ENCODE measurements at regions of chr18 and their contacts with region 1.

Region 1: GRCh38 chr18:64474773-64475172 is 325.9 kb upstream of the LINC00305 start:
- DNase-seq: no peak
- ATAC-seq: no peak
- H3K4me3 ChIP-seq: no peak overlapping the region
- H3K27ac ChIP-seq: no peak overlapping the region
- H3K4me1 ChIP-seq: no peaks in the 10 kb centered on the region
- H3K27me3 ChIP-seq: no peaks in the 10 kb centered on the region
- CTCF ChIP-seq: no peak
- EP300 ChIP-seq: no peak
- POLR2A ChIP-seq: no peak
- RAD21 ChIP-seq: no peak

Region 2: DNA sequence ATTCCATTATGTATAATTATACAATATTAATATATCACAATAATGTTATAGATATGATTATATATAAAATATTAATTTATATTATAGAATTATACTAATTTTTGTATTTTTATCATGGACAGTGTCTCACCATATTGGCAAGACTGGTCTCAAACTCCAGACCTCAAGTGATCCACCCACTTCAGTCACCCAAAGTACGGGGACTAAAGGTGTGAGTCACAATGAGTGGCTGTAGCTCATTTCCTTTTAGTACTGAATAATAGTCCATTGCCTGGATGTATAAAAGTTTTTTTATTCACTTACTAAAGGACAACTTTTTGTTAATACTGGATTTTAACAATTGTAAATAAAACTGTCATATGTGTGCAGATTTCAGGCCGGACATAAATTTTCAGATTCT is 91.7 kb after region 1 on chr18:
- CTCF ChIA-PET with region 1: no interaction called
- POLR2A ChIA-PET with region 1: no interaction called
- in situ Hi-C with region 1: loop called (anchors 25 kb)
- intact Hi-C with region 1: no loop called
- DNase-seq: no peak
- ATAC-seq: no peak
- H3K4me3 ChIP-seq: no peak overlapping the region
- H3K27ac ChIP-seq: no peak overlapping the region
- H3K4me1 ChIP-seq: no peaks in the 10 kb centered on the region
- H3K27me3 ChIP-seq: no peaks in the 10 kb centered on the region
- CTCF ChIP-seq: no peak
- EP300 ChIP-seq: no peak
- POLR2A ChIP-seq: no peak
- RAD21 ChIP-seq: no peak

Measured in HepG2 (cell line).